ENCODE measurements at regions of chr13 and their contacts with region 1.

Region 1: DNA sequence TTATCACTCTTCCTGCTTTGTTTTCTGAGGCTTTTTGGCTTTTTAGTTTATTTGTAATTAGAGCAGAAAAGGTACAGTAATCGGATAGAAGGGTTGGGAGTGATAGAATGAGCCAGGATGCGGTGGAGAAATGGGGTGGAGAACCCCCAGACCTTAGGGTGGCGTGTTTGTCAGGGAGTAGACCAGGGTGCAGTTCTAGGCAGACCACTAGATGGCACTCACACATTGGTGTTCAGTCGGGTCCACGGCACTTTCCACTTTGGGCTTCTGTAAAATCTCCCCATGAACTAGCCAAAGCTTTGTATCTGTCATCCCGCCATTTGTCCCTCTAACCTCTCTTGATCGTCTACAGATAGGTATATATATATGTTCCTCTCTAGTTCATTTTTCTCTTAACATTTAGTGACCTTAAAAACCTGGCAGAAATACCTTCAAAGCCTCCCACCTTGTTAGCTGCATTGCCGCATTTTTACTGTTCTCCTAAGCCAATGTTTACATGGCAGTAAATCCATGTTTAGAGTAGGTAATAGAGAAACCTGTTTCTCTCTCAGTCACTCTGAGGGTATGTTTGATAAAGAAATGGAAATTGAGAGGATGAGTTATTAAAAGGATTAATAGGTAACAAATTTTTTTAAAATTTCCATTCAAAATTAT is 154.9 kb downstream of the TM9SF2 start:
- DNase-seq: peak; percentile 55
- ATAC-seq: peak; percentile 82
- H3K4me3 ChIP-seq: peak overlapping the region; percentile 1 to 43
- H3K27ac ChIP-seq: peak overlapping the region; percentile 63
- H3K4me1 ChIP-seq: peaks cover 11 to 23% of the 10 kb centered on the region in 2 experiments
- H3K27me3 ChIP-seq: no peaks in the 10 kb centered on the region
- CTCF ChIP-seq: peak; percentile 86 to 93 (median 90)
- POLR2A ChIP-seq: no peak
- RAD21 ChIP-seq: peak; percentile 87

Region 2: GRCh38 chr13:98653463-98653985 is 1002.7 kb before region 1 on chr13:
- CTCF ChIA-PET with region 1: no interaction called
- POLR2A ChIA-PET with region 1: no interaction called
- RAD21 ChIA-PET with region 1: no interaction called
- intact Hi-C with region 1: no loop called
- DNase-seq: peak; percentile 85
- ATAC-seq: peak; percentile 97
- H3K4me3 ChIP-seq: no peak overlapping the region
- H3K27ac ChIP-seq: no peak overlapping the region
- H3K4me1 ChIP-seq: peaks cover 0 to 28% of the 10 kb centered on the region in 2 experiments; a peak in 2 of 4 replicates
- H3K27me3 ChIP-seq: no peaks in the 10 kb centered on the region
- CTCF ChIP-seq: peak; percentile 86 to 94 (median 92)
- POLR2A ChIP-seq: no peak
- RAD21 ChIP-seq: peak; percentile 93

Region 3: GRCh38 chr13:99606324-99607066 is 49.7 kb before region 1 on chr13:
- CTCF ChIA-PET with region 1: no interaction called
- POLR2A ChIA-PET with region 1: interaction called, 4 read pairs
- RAD21 ChIA-PET with region 1: no interaction called
- intact Hi-C with region 1: loop called (anchors 2 kb)
- DNase-seq: peak; percentile 43
- ATAC-seq: peak; percentile 89
- H3K4me3 ChIP-seq: peak within 1 kb of the TSS; percentile 78 to 85
- H3K27ac ChIP-seq: peak within 1 kb of the TSS; percentile 70
- H3K4me1 ChIP-seq: peaks cover 10 to 14% of the 10 kb centered on the region in 2 experiments; a peak in 3 of 4 replicates
- H3K27me3 ChIP-seq: no peaks in the 10 kb centered on the region
- CTCF ChIP-seq: no peak
- POLR2A ChIP-seq: peak; percentile 71
- RAD21 ChIP-seq: no peak

Region 4: GRCh38 chr13:99969919-99970621 is 313.9 kb after region 1 on chr13:
- CTCF ChIA-PET with region 1: no interaction called
- POLR2A ChIA-PET with region 1: no interaction called
- RAD21 ChIA-PET with region 1: no interaction called
- intact Hi-C with region 1: loop called (anchors 5 kb)
- DNase-seq: peak; percentile 66
- ATAC-seq: peak; percentile 78
- H3K4me3 ChIP-seq: peak overlapping the region; percentile 79 to 82
- H3K27ac ChIP-seq: peak overlapping the region; percentile 97
- H3K4me1 ChIP-seq: peaks cover 10 to 33% of the 10 kb centered on the region in 2 experiments
- H3K27me3 ChIP-seq: no peaks in the 10 kb centered on the region
- CTCF ChIP-seq: no peak
- POLR2A ChIP-seq: peak; percentile 12
- RAD21 ChIP-seq: no peak

Region 5: DNA sequence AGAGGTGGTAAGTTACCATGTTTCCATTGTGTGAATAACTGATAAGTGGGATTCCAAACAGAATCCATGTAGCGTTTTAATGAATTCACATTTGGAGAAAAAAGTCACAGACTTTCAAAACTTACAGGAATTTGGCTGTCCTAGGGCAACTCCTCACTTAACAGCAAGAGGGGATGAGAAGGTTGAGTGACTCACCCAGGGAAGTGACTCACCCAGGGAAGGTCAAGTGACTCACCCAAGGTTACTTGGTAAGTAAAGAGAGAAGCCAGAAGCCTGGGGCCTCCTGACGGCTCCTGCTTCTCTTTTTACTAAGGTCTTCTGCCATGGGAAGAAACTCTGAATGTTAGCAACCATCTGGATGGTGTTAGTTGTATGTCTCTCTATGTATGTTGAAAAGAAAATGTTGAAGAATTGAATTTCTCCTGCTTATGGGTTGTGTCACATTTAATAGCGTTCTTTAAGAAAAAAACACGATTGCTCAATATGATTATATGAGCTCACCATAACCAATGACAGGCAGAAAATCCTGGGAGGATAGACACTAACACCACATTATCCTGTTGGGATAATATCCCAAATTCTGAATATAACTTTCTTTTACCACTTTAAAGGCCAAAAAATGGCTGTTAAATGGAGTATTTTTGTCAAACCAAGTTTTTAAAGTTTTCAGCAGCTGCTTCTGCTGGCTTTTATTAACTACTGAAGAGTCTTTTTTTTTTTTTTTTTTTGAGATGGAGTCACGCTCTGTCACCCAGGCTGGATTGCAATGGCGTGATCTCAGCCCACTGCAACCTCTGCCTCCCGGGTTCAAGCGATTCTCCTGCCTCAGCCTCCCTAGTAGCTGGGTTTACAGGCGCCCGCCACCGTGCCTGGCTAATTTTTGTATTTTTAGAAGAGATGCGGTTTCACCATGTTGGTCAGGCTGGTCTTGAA is 736.8 kb after region 1 on chr13:
- CTCF ChIA-PET with region 1: no interaction called
- POLR2A ChIA-PET with region 1: no interaction called
- RAD21 ChIA-PET with region 1: no interaction called
- intact Hi-C with region 1: loop called (anchors 5 kb)
- DNase-seq: peak; percentile 98
- ATAC-seq: peak; percentile 79
- H3K4me3 ChIP-seq: peak overlapping the region in 1 of 2 experiments; percentile 46; a peak in 2 of 4 replicates
- H3K27ac ChIP-seq: peak overlapping the region; percentile 98
- H3K4me1 ChIP-seq: peaks cover 83 to 87% of the 10 kb centered on the region in 2 experiments
- H3K27me3 ChIP-seq: no peaks in the 10 kb centered on the region
- CTCF ChIP-seq: no peak
- POLR2A ChIP-seq: no peak
- RAD21 ChIP-seq: peak; percentile 49; the same call in 1 of the 2 replicates

Region 6: GRCh38 chr13:101127741-101128353 is 1471.6 kb after region 1 on chr13:
- CTCF ChIA-PET with region 1: interaction called, 4 read pairs
- POLR2A ChIA-PET with region 1: no interaction called
- RAD21 ChIA-PET with region 1: no interaction called
- intact Hi-C with region 1: loop called (anchors 5 kb)
- DNase-seq: peak; percentile 21
- ATAC-seq: peak; percentile 80
- H3K4me3 ChIP-seq: no peak overlapping the region
- H3K27ac ChIP-seq: no peak overlapping the region
- H3K4me1 ChIP-seq: no peaks in the 10 kb centered on the region
- H3K27me3 ChIP-seq: no peaks in the 10 kb centered on the region
- CTCF ChIP-seq: peak; percentile 45 to 74 (median 62); a peak in 5 of 6 replicates
- POLR2A ChIP-seq: no peak
- RAD21 ChIP-seq: peak; percentile 60